CD8-positive, alpha-beta T cell (primary cell): ENCODE measurements at regions of chr18 and their contacts with region 1.

Region 1: GRCh38 chr18:57113799-57114420 is 33.0 kb upstream of the BOD1L2 start:
- DNase-seq: no peak
- ATAC-seq: no peak
- H3K4me3 ChIP-seq: no peak overlapping the region
- H3K4me3 Mint-ChIP-seq: no peak overlapping the region
- H3K27ac ChIP-seq: no peak overlapping the region
- H3K27ac Mint-ChIP-seq: no peak overlapping the region
- H3K4me1 ChIP-seq: no peaks in the 10 kb centered on the region
- H3K4me1 Mint-ChIP-seq: no peaks in the 10 kb centered on the region
- H3K27me3 ChIP-seq: no peaks in the 10 kb centered on the region
- H3K27me3 Mint-ChIP-seq: peaks cover 9% of the 10 kb centered on the region
- CTCF ChIP-seq: no peak

Region 2: DNA sequence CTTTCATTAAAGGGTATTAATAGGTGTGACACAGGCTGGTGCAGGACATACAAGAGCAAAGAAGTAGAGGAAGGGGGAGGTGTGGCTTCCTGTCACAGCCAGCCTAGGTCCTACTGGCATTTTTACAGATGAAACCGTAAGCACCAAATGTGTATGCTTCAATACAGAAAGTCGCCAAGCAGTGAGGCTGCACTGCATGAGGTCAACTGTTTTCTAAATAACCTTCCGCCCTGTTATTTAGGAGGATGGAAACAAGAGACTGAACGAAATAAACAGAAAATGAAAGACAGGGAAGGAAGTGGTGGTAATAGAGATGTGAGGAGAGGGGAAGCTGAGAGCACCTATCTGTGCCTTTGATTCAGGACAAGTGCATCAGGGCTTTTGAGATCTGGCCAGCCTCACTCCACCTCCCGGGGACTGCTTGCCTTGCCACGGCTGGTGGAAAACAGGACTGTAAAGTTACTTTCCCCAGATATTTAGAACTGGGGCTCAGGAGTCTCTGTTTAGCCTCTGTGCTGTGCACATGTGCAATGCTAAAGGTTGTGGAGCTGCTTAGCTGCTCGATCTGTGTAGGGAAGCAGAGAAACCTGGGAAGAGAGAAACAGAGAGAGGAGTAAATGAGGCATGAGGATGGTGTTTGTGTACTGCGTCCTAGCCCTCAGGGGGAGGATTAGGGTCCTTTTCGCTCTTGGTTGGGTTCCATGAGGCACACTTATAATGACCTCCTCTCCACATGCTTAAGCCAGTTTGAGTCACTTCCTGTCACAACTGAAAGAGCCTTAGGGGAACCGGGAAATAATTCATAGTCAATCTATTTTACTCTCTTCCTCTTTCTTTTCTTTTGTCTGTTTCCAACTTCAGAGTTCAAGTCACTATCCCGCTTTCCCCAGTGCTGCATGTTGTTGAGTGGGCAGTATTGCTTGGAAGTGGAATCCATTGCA is 29.3 kb before region 1 on chr18:
- CTCF ChIA-PET with region 1: no interaction called
- POLR2A ChIA-PET with region 1: no interaction called
- intact Hi-C with region 1: no loop called
- DNase-seq: no peak
- ATAC-seq: no peak
- H3K4me3 ChIP-seq: peak overlapping the region; percentile 28 to 34
- H3K4me3 Mint-ChIP-seq: peak overlapping the region; percentile 81
- H3K27ac ChIP-seq: no peak overlapping the region
- H3K27ac Mint-ChIP-seq: peak overlapping the region; percentile 32
- H3K4me1 ChIP-seq: peaks cover 18% of the 10 kb centered on the region
- H3K4me1 Mint-ChIP-seq: peaks cover 22% of the 10 kb centered on the region
- H3K27me3 ChIP-seq: no peaks in the 10 kb centered on the region
- H3K27me3 Mint-ChIP-seq: peaks cover 3% of the 10 kb centered on the region
- CTCF ChIP-seq: no peak

Region 3: DNA sequence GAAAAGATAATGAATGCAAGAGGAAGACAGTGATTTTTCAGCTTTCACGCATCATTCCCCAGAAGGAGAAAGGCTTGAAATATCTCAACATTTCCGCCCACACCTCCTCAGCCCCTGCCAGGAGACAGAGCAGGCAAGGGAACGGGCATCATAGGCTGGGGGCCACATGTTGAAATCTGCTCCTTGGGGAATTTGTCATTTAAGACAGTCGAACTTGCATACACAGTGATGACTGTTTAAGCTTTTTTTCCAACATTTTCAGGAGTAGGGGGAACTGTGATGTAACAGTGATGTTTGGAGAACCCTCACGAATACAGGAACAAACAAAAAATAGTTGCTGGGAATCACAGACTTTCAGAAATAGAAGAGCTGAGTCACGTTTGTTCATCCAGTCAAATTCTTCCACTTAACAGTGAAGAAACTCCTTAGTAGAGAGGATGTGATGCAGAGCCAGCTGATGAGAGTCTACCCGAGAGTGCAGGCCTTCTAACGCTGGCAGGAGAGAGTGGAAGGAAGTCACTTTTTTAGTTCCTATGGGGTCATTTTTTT is 1248.2 kb after region 1 on chr18:
- CTCF ChIA-PET with region 1: no interaction called
- POLR2A ChIA-PET with region 1: no interaction called
- intact Hi-C with region 1: loop called in 1 of 2 experiments (anchors 10 kb)
- DNase-seq: peak in 1 of 9 experiments; percentile 10
- ATAC-seq: no peak
- H3K4me3 ChIP-seq: no peak overlapping the region
- H3K4me3 Mint-ChIP-seq: no peak overlapping the region
- H3K27ac ChIP-seq: no peak overlapping the region
- H3K27ac Mint-ChIP-seq: no peak overlapping the region
- H3K4me1 ChIP-seq: no peaks in the 10 kb centered on the region
- H3K4me1 Mint-ChIP-seq: no peaks in the 10 kb centered on the region
- H3K27me3 ChIP-seq: no peaks in the 10 kb centered on the region
- H3K27me3 Mint-ChIP-seq: no peaks in the 10 kb centered on the region
- CTCF ChIP-seq: no peak